ENCODE measurements at regions of chr11 and their contacts with region 1.

Region 1: DNA sequence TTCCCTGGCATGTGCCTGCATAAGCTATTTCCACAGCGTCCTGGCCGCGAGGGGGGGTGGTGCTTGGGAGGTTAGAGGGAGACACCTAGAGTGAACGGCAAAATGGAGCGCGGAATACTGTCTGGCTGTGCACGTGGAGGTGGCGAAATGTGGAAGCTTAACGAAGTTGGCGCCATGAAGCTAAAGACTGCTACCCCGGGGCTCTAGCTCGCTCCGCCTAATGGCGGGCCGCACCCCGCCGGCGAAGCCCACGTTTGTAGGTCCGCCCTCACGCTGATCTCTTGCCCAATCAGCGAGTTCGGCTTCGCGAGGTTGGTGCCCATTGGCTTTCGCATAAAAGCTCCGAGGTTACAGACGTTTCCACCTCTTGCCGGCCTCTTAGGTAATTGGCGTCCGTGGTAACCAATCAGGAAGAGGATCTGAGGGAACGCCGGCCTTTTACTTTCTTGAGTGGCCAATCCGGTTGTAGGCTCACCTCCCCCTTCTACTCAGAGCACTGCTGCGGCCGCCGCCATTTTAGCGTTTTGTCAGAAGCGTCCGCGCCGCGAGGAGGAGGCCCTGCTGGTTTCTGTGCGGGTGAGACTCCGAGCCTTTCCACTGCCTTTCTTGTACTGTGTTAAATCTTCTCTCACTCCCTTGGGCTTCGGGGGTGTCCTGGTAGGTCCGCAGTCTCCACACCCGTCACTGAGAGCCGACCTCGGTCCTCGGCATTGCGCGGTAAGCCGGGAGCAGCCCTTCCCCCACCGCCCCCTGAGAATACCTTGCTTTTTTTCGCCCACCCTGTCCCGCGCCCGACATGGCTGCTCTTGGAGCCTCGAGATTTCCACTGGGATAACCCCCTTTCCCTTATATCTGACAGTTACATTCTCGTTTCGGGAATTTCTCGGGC is at the start of gene RBM4:
- DNase-seq: peak; percentile 84 to 99 (median 98)
- ATAC-seq: peak; percentile 84 to 90
- H3K4me3 Mint-ChIP-seq: peak within 1 kb of the TSS; percentile 89 to 99 (median 95)
- H3K27ac Mint-ChIP-seq: peak within 1 kb of the TSS; percentile 89 to 99 (median 97)
- H3K4me1 Mint-ChIP-seq: peaks cover 36 to 73% (median 69%) of the 10 kb centered on the region in 4 donors
- H3K27me3 Mint-ChIP-seq: no peaks in the 10 kb centered on the region
- polyA plus RNA-seq, gene RBM4: 250 to 283 (median 262) TPM

Region 2: DNA sequence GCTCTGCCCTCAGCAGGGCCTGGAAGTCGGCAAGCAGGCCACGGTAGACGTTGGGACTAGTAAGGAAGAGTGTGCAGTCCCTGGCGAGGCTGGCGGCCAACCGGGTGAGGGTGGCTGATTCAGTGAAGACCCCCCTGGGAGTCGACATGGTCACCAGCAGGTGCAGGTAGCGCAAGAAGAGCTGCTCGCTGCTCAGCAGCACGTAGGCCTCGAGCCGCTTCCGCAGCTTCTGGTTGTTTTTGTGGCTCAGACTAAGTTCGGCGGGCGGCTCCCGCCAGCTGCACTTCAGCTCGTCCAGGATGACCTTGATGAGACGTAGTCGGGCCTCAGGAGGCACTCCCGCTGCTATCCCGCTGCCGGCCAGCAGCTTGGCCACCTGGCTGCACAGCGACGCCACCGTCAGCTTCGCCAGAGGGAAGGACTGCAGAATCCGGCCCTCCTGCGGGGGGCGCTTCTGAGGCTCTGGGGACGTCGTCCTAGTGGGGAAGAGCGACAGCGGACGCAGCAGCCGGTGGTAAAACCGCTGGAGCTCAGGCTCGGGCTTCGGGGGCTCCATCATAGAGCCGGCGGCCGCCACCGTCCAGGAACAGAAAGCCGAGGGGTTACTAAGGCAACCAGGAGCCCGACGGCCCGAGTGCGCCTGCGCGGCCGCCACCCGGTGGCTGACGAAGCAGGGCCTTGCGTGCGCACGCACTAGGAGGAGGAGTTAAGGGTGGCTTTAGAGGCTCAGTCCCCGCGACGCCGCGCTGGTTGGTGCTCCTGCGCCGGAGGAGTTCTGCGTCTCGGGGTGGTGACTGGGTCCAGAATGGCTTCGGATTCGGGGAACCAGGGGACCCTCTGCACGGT is 45.7 kb before region 1 on chr11 and contains the starts of genes CCDC87 and CCS:
- POLR2A ChIA-PET with region 1: interaction called, 52 read pairs
- DNase-seq: peak; percentile 94 to 100 (median 98)
- ATAC-seq: peak; percentile 94 to 96
- H3K4me3 Mint-ChIP-seq: peak within 1 kb of the TSS; percentile 88 to 100 (median 100)
- H3K27ac Mint-ChIP-seq: peak within 1 kb of the TSS; percentile 94 to 100 (median 100)
- H3K4me1 Mint-ChIP-seq: peaks cover 19 to 46% (median 37%) of the 10 kb centered on the region in 4 donors
- H3K27me3 Mint-ChIP-seq: no peaks in the 10 kb centered on the region
- polyA plus RNA-seq, gene CCDC87: not detected
- polyA plus RNA-seq, gene CCS: 39.2 to 53.4 (median 46.6) TPM

Region 3: GRCh38 chr11:66625041-66625751 is 13.2 kb before region 1 on chr11:
- POLR2A ChIA-PET with region 1: interaction called, 198 read pairs
- DNase-seq: peak in 1 of 10 donors; percentile 0
- ATAC-seq: peak in 1 of 2 donors; percentile 2
- H3K4me3 Mint-ChIP-seq: peak overlapping the region in 4 of 10 donors; percentile 14 to 45 (median 21)
- H3K27ac Mint-ChIP-seq: peak overlapping the region in 4 of 10 donors; percentile 29 to 84 (median 50)
- H3K4me1 Mint-ChIP-seq: peaks cover 43 to 94% (median 85%) of the 10 kb centered on the region in 4 donors
- H3K27me3 Mint-ChIP-seq: no peaks in the 10 kb centered on the region

Region 4: DNA sequence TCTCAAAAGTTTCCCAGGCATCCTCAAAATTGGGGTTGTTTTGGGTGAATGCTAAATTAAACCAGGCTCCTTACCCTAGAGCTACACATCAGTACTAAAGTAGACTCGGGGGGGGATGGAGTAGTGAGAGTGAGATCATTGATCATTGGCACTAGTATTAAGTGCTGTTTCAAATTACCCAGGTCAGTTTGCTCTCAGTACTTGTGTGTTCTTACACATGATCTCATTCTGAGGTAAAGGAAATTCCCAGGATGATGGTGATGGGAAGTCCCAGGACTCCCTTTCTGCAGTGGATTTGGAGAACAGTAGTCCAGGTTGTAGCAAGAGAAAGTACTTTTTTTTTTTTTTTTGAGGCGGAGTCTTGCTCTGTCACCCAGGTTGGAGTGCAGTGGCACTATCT is 12.6 kb after region 1 on chr11:
- POLR2A ChIA-PET with region 1: interaction called, 32 read pairs
- DNase-seq: no peak
- ATAC-seq: no peak
- H3K4me3 Mint-ChIP-seq: peak overlapping the region in 1 of 10 donors; percentile 15
- H3K27ac Mint-ChIP-seq: peak overlapping the region in 5 of 10 donors; percentile 5 to 66 (median 30)
- H3K4me1 Mint-ChIP-seq: peaks cover 23 to 70% (median 63%) of the 10 kb centered on the region in 4 donors
- H3K27me3 Mint-ChIP-seq: no peaks in the 10 kb centered on the region

Region 5: DNA sequence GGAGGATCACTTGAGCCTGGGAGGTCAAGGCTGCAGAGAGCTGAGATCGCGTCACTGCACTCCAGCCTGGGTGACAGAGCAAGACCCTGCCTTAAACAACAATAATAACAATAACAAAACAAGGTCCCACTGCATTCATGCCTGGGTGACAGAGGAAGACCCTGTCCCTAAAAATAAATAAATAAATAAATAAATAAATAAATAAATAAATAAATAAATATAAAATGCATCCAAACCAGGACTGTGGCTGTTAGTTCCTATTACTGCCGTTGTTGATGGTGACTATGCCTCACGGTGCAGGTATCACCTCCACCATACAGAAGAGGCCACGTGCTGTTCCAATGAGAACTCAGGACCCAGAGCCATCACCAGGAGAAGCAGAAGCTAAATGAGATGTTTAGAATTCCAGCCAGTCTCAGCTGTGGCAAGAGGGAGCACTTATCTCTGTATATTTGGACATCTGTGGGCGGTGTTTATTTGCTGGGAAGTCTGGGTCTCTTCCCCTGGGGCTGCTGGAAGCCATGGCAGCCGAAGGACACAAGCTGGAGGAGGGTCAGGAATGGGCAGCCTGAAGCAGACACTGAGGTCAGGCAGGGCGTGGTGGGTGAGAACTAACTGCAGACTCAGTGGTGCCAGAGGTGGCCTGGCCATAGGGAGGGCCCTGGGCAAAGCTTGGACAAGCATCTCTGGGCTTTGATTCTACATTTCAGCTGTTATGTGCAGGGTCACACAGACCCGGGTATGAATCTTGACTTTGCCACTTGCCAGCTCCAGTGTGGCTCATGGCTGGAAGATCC is 358.4 kb after region 1 on chr11:
- POLR2A ChIA-PET with region 1: no interaction called
- DNase-seq: peak in 1 of 10 donors; percentile 4
- ATAC-seq: no peak
- H3K4me3 Mint-ChIP-seq: no peak overlapping the region
- H3K27ac Mint-ChIP-seq: no peak overlapping the region
- H3K4me1 Mint-ChIP-seq: no peaks in the 10 kb centered on the region
- H3K27me3 Mint-ChIP-seq: peaks cover 0 to 16% (median 10%) of the 10 kb centered on the region in 5 donors

Measured in naive thymus-derived CD8-positive, alpha-beta T cell (primary cell).